ENCODE measurements at regions of chr4 and their contacts with region 1.

Region 1: GRCh38 chr4:172975651-172976229 is 192.9 kb upstream of the GALNT7 start:
- DNase-seq: no peak
- ATAC-seq: no peak

Region 2: GRCh38 chr4:171846232-171846631 is 1129.5 kb before region 1 on chr4:
- intact Hi-C with region 1: loop called (anchors 10 kb)
- DNase-seq: no peak
- ATAC-seq: no peak

Region 3: DNA sequence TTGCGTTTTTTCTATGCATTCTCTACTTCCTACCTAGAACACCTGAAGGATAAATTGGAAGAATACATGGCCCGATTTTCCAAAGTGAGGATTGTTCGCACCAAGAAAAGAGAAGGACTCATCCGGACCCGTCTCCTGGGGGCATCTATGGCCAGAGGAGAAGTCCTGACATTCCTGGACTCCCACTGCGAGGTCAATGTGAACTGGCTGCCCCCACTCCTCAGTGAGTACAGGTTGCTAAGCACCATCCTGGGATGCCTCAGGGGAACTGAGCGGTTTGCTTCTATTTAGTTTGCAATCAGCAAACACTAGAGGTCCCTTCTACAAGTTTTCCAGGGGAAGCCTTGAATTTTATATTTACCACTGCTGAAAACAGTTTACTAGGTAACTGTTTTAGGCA is 166.4 kb before region 1 on chr4:
- intact Hi-C with region 1: no loop called
- DNase-seq: no peak
- ATAC-seq: no peak

Measured in sciatic nerve (tissue), 2 donors.